Adrenal gland (tissue), 19 donors: ENCODE measurements at regions of chr12 and their contacts with region 1.

Region 1: GRCh38 chr12:4538207-4539160 is at the start of gene RAD51AP1:
- DNase-seq: peak; percentile 94 to 98 (median 95)
- H3K4me3 ChIP-seq: peak within 1 kb of the TSS; percentile 19 to 82 (median 74)
- H3K27ac ChIP-seq: peak within 1 kb of the TSS; percentile 70 to 96 (median 94)
- H3K4me1 ChIP-seq: peaks cover 11 to 19% of the 10 kb centered on the region in 2 donors
- H3K27me3 ChIP-seq: no peaks in the 10 kb centered on the region
- CTCF ChIP-seq: no peak
- POLR2A ChIP-seq: peak in 1 of 2 donors; percentile 32
- total RNA-seq, gene RAD51AP1: 0.55 to 12.1 (median 2.3) TPM in 8 of 9 donors, not detected in the other

Region 2: DNA sequence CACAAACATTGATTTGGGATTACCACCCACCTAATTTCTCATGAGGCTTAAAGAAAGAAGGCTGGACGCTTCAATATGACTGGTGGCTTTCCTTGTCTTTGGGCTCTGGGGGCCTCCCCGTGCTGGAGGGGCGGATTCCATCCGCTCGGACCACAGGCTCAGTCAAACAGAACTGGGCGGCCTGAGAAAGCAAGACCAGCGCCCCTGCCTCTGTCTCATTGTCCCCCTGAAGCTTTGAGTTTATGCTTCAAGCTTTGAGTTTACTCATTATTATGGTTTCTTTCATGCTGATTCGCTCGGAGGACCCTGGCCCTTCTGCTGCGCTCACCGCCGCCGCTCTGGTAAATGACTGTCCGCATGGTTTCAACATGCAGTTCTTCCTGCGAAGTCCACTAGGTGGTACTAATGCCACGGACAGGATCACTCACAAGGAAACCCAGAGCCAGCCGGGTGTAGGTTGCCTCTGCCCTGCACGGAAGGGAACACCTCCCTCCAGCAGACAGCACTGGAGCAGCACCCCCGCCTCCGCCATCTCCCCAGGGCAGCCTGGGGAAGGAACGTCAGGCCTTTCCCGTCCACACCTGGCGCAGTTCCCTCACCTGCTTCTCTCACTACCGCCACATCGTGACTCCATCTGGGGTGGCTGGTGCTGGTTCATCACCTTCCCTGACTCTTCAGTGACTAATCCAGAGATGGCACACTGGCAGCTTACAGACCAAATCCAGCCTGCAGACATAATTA is 230.7 kb before region 1 on chr12:
- intact Hi-C with region 1: loop called in 1 of 2 experiments (anchors 10 kb)
- DNase-seq: peak; percentile 77 to 92 (median 84)
- H3K4me3 ChIP-seq: no peak overlapping the region
- H3K27ac ChIP-seq: peak overlapping the region in 2 of 5 donors; percentile 40 to 60
- H3K4me1 ChIP-seq: peaks cover 17 to 44% of the 10 kb centered on the region in 2 donors
- H3K27me3 ChIP-seq: no peaks in the 10 kb centered on the region
- CTCF ChIP-seq: peak; percentile 60 to 83 (median 81)
- POLR2A ChIP-seq: peak in 1 of 2 donors; percentile 24

Region 3: GRCh38 chr12:4809449-4810218 is 271.1 kb after region 1 on chr12:
- intact Hi-C with region 1: no loop called
- DNase-seq: no peak
- H3K4me3 ChIP-seq: peak overlapping the region in 1 of 4 donors; percentile 29
- H3K27ac ChIP-seq: no peak overlapping the region
- H3K4me1 ChIP-seq: peaks cover 0 to 12% of the 10 kb centered on the region in 2 donors
- H3K27me3 ChIP-seq: peaks cover 36% of the 10 kb centered on the region
- CTCF ChIP-seq: no peak
- POLR2A ChIP-seq: no peak